Common myeloid progenitor, CD34-positive (primary cell): ENCODE measurements at regions of chr1 and their contacts with region 1.

Region 1: DNA sequence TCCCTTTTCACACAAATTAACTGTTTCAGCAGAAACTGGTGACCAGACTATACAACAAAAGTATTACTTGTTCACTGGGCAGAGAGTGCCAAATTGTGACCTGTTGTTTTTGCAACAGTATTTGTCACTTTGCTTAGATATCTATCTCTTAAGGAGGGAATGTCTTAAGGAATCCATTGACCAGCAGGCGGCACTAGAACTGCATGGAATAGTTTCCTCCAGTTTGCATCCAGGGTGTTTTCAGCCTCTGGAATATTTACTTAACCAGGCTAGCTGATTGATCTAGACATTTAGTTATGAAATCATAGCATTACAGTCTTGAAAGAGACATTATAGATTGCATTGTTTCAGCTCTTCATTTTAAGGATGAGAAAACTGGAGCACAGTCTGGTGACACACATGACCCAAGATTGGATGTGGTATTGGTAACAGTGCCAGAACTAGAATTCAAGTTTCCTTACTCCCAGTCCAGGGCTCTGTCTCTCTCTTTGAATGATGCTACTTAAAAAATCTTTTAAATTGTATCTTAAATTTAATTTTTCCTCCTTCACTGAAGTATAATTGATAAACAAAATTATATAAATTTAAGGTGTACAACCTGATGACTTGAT is 16.9 kb downstream of the RPTN start:
- DNase-seq: peak; percentile 60 to 74 (median 63)
- H3K4me3 ChIP-seq: no peak overlapping the region
- H3K27ac ChIP-seq: no peak overlapping the region
- H3K4me1 ChIP-seq: no peaks in the 10 kb centered on the region
- H3K27me3 ChIP-seq: peaks cover 0 to 18% (median 9%) of the 10 kb centered on the region in 5 experiments

Region 2: DNA sequence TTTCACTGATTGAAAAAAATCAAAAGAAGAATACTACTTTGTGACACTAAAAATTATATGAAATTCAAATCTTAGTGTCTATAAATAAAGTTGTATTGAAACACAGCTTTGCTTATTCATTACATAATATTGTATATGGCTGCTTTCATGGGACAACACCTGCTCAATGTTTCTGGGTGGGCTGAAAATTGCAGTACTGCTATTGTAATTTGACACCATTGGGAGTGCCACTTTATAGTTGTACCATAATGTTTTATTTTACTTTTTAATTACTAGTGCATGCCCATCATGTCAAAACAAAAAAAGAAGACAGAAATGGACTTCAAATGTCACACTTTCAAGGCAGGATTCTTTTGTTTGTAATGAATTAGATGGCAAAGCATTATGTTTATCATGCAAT is 33.5 kb after region 1 on chr1:
- CTCF ChIA-PET with region 1: interaction called, 111 read pairs
- POLR2A ChIA-PET with region 1: no interaction called
- DNase-seq: no peak
- H3K4me3 ChIP-seq: no peak overlapping the region
- H3K27ac ChIP-seq: no peak overlapping the region
- H3K4me1 ChIP-seq: no peaks in the 10 kb centered on the region
- H3K27me3 ChIP-seq: no peaks in the 10 kb centered on the region

Region 3: DNA sequence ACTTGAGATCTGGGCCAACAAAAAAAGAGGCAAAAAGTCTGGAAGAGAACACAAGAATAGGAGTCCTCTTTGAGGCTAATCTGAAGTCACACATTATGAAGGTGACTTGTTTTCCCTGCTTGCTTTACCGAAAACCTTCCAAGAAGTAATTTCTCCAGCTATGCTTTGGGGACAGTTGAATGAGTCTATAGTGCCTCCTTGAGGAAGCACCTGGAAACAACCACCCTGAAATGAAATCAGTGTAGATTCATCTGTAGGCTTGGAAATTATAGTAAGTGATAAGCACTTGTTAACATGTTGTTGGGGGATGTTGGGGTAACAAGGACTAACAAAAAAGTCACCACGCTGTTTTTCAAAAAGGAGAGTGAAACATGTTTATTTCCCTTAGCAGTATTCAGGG is 40.4 kb after region 1 on chr1:
- CTCF ChIA-PET with region 1: interaction called, 111 read pairs
- POLR2A ChIA-PET with region 1: no interaction called
- DNase-seq: peak in 2 of 3 donors; percentile 27 to 46
- H3K4me3 ChIP-seq: no peak overlapping the region
- H3K27ac ChIP-seq: no peak overlapping the region
- H3K4me1 ChIP-seq: no peaks in the 10 kb centered on the region
- H3K27me3 ChIP-seq: no peaks in the 10 kb centered on the region

Region 4: GRCh38 chr1:152244576-152245273 is 102.6 kb after region 1 on chr1:
- CTCF ChIA-PET with region 1: no interaction called
- POLR2A ChIA-PET with region 1: no interaction called
- DNase-seq: no peak
- H3K4me3 ChIP-seq: no peak overlapping the region
- H3K27ac ChIP-seq: no peak overlapping the region
- H3K4me1 ChIP-seq: no peaks in the 10 kb centered on the region
- H3K27me3 ChIP-seq: peaks cover 0 to 2% (median 0%) of the 10 kb centered on the region in 5 experiments

Region 5: GRCh38 chr1:152328801-152329391 is 186.8 kb after region 1 on chr1:
- CTCF ChIA-PET with region 1: no interaction called
- POLR2A ChIA-PET with region 1: no interaction called
- DNase-seq: no peak
- H3K4me3 ChIP-seq: no peak overlapping the region
- H3K27ac ChIP-seq: no peak overlapping the region
- H3K4me1 ChIP-seq: no peaks in the 10 kb centered on the region
- H3K27me3 ChIP-seq: peaks cover 0 to 2% (median 2%) of the 10 kb centered on the region in 5 experiments